ENCODE measurements at regions of chr17 and their contacts with region 1.

Region 1: DNA sequence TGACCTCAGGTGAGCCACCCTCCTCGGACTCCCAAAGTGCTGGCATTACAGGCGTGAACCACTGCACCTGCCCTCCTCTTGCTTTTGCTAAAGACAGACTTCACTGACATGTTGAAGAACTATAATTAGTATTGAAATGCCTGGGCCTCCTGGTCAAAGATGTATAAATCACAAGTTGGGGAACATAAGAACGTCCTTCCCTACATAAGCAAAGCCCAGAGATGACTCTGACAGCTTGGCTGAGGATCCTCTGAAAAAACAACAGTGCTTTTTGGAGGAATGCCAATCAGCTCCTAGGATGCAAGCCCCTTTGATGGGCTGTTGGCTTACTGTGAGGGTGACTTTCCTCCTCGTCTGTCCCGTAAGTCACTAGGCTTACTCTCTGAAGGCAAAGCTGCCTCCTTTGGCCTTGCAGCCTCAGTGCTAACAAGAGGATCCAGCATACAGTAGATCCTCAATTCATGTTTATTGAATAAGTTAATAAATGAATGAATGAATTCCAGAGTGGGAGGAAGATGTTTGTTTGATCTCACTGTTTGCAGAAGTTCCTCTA is 6.3 kb downstream of the APOH start:
- DNase-seq: no peak
- H3K4me3 ChIP-seq: no peak overlapping the region
- H3K27ac ChIP-seq: no peak overlapping the region
- H3K27me3 ChIP-seq: peaks cover 0 to 6% (median 0%) of the 10 kb centered on the region in 45 donors
- CTCF ChIP-seq: no peak

Region 2: DNA sequence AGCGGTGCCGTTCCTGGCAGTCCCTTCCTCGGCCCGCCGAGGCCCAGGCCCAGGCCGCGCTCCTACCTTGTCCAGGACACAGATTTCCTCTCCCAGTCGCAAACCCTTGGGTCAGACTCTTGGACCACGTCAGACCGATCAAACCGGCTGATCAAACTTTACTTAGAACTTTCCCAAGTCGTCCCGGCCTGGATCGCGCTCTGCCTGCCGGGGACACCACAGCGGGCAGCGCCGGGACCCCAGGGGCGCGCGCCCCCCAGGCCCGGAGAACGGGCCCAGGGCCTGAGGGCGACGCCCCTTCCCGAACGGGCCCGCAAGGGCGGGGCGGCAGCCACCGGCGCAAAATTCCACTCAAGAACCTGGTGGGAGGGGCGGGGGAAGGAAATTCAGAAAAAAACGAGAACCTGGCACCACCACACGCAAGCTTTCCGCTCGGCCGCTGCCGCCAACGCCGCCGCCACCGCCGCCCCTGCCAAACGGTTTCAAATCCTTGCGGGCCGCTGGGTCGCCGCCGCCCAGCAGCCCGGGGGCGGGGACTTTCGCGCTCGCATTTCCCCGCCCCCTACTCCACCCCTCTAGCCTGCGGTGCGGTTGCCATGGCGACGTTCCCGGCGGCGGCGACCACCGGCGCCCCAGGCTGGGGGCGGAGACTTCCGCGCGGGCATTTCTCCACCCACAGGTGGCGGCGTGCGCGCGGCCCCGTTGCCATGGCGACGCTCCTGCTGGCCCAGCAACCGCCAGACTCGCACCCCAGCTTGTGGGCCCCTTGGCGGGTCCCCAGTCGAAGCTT is 31.1 kb before region 1 on chr17 and contains the start of gene CEP112:
- intact Hi-C with region 1: no loop called
- DNase-seq: peak in 9 of 10 donors; percentile 29 to 75 (median 50)
- H3K4me3 ChIP-seq: peak within 1 kb of the TSS; percentile 47 to 86 (median 77)
- H3K27ac ChIP-seq: peak within 1 kb of the TSS in 50 of 59 donors; percentile 16 to 86 (median 59)
- H3K27me3 ChIP-seq: no peaks in the 10 kb centered on the region
- CTCF ChIP-seq: peak in 11 of 56 donors; percentile 11 to 26 (median 14)
- total RNA-seq, gene CEP112: 16.4 to 52.9 (median 30.2) TPM

Region 3: DNA sequence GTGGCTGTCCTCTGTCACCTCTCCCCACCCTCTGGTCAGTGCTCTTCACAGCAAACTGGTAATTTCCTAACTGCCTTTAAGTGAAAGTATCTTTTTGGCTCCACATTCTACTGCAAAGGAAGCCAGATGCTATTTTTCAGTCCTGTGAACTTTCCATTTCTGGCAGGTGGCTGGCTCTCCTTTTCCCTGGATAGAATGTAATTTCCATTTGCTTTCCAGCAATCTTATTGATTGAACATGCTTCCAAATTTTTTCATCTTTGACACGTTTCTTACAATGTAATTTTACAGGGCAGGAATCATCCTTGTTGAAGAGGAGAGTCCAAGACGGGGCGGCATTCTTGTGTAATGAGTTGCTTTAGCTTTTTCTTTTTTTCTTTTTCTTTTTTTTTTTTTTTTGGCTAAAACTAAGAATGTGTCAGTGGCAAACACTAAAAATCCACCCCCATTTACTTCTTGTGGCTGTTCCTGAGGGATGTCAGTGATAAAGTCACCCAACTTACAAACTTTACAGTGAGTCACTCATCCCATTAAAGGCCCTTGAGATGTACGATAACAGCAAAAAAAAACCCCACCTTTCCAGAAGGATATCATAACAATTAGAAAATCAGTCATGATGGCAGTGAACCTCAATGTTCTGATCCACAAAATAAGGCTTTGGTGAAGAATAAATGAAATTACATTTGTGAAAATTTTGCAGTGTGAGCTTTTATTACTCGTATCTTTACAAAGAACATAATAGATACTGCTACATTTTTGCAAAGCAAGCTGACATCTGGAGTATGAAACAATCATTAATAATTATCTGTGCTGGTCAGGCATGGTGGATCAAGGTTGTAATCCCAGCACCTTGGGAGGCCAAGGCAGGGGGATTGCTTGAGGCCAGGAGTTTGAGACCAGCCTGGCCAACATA is 50.2 kb after region 1 on chr17:
- intact Hi-C with region 1: loop called in 1 of 2 experiments (anchors 5 kb)
- DNase-seq: no peak
- H3K4me3 ChIP-seq: no peak overlapping the region
- H3K27ac ChIP-seq: no peak overlapping the region
- H3K27me3 ChIP-seq: no peaks in the 10 kb centered on the region
- CTCF ChIP-seq: no peak

Measured in dorsolateral prefrontal cortex (tissue), 120 donors.